ENCODE measurements at regions of chr10 and their contacts with region 1.

Region 1: DNA sequence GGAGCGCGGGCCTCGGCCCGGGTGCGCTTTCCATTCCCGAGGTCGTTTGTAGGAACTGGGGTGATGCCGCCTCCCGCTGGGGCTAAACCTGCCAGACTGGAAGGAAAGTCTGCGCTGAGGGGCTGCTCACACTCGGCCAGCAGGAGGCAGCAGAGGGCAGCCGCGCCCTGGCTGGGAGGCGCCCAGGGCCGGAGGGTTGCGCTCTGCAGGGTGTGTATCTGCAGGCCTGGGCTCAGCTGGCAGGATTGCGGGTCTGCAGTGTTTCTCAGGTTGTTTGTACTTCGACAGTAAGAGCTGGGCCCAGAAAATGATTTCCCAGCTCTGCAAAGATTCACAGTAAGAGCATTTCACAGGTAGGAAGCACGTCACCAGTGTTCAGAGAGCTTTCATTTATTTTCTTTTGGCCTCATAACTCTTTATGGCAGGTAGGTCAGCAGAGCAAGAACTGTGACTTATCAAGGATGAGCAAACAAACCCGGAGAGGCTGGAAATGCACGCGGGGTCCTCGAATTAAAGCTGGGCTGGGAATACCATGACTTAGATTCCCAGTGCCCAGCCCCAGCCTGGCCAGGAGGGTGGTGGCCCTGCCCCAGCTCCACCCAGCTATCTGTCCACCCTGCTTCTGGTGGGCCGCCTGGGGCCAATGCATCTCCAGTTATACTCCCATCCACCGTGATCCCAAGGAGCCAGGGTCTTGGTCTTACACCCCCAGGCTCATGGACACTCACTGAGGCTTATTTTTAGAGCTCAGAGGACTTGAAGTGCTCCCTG is 15.2 kb upstream of the PPP2R2D start:
- DNase-seq: peak; percentile 79
- ATAC-seq: peak; percentile 98

Region 2: GRCh38 chr10:132023092-132023811 is 137.7 kb after region 1 on chr10:
- intact Hi-C with region 1: loop called (anchors 1 to 2 kb)
- DNase-seq: peak; percentile 87
- ATAC-seq: peak; percentile 93 to 95

Region 3: DNA sequence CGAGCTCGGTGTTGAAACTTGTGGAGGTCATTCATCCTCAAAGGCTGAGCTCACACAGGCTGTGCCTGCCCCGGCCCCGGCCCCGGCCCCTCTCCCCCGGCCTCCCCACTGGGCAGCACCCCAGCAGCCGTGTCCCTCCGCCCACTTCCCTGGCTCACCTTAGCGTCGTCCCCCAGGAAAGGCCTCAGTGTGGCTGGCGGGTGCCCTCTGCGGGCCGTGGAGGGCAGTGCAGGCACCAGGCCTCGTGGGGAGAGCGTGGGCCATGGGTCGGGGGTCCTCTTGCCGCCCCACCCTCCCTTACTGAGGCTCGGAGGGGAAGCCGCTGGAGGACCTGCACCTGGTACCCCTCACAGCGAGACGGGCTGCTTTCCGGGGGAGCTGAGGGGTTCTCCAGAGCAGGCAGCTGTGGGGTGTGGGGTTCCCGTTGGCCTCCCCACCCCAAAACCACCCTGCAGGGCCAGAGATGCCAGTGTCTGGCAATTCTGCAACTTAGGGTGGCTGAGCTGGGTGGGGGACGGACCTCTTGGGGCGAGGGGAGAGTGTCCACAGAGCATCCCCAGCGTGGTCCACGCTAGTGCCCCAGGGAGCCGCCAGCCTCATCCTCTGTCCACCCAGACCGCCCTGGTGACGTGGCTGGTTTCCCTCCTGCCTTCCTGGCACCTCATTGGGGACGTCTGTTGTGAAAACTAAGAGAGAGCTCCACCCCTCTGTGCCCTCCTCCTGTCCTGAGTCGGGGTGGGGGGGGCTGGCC is 257.0 kb after region 1 on chr10:
- intact Hi-C with region 1: loop called (anchors 5 to 10 kb)
- DNase-seq: peak; percentile 50
- ATAC-seq: peak; percentile 69 to 78

Measured in left cardiac atrium (tissue), 4 donors.